Common myeloid progenitor, CD34-positive (primary cell): ENCODE measurements at regions of chr7 and their contacts with region 1.

Region 1: GRCh38 chr7:143345428-143345900 is 17.0 kb downstream of the FAM131B start:
- DNase-seq: peak; percentile 87 to 88 (median 87)
- H3K4me3 ChIP-seq: peak overlapping the region in 5 of 7 experiments; percentile 40 to 71 (median 56)
- H3K27ac ChIP-seq: no peak overlapping the region
- H3K4me1 ChIP-seq: peaks cover 0 to 13% (median 8%) of the 10 kb centered on the region in 4 experiments
- H3K27me3 ChIP-seq: peaks cover 0 to 5% (median 0%) of the 10 kb centered on the region in 5 experiments

Region 2: GRCh38 chr7:143334244-143334643 is 11.2 kb before region 1 on chr7:
- CTCF ChIA-PET with region 1: interaction called, 18 read pairs
- POLR2A ChIA-PET with region 1: interaction called, 3 read pairs
- DNase-seq: no peak
- H3K4me3 ChIP-seq: no peak overlapping the region
- H3K27ac ChIP-seq: no peak overlapping the region
- H3K4me1 ChIP-seq: peaks cover 0 to 8% (median 1%) of the 10 kb centered on the region in 4 experiments
- H3K27me3 ChIP-seq: no peaks in the 10 kb centered on the region